Activated CD8-positive, alpha-beta memory T cell treated with anti-CD3 and anti-CD28 coated beads, Interleukin-2, amount 10 ng/mL, durations not matched to agents 7 days and 5 days (primary cell): ENCODE measurements at regions of chr1 and their contacts with region 1.

Region 1: GRCh38 chr1:110053557-110054428 is 16.7 kb downstream of the ALX3 start:
- DNase-seq: peak; percentile 74
- ATAC-seq: peak; percentile 81
- H3K4me3 Mint-ChIP-seq: no peak overlapping the region
- H3K27ac Mint-ChIP-seq: no peak overlapping the region
- H3K4me1 Mint-ChIP-seq: no peaks in the 10 kb centered on the region
- H3K27me3 Mint-ChIP-seq: no peaks in the 10 kb centered on the region

Region 2: GRCh38 chr1:110068646-110069403 is 15.0 kb after region 1 on chr1:
- CTCF ChIA-PET with region 1: interaction called, 16 read pairs
- DNase-seq: no peak
- ATAC-seq: peak; percentile 34
- H3K4me3 Mint-ChIP-seq: peak overlapping the region; percentile 2
- H3K27ac Mint-ChIP-seq: peak overlapping the region; percentile 41
- H3K4me1 Mint-ChIP-seq: peaks cover 9% of the 10 kb centered on the region
- H3K27me3 Mint-ChIP-seq: peaks cover 76% of the 10 kb centered on the region

Region 3: DNA sequence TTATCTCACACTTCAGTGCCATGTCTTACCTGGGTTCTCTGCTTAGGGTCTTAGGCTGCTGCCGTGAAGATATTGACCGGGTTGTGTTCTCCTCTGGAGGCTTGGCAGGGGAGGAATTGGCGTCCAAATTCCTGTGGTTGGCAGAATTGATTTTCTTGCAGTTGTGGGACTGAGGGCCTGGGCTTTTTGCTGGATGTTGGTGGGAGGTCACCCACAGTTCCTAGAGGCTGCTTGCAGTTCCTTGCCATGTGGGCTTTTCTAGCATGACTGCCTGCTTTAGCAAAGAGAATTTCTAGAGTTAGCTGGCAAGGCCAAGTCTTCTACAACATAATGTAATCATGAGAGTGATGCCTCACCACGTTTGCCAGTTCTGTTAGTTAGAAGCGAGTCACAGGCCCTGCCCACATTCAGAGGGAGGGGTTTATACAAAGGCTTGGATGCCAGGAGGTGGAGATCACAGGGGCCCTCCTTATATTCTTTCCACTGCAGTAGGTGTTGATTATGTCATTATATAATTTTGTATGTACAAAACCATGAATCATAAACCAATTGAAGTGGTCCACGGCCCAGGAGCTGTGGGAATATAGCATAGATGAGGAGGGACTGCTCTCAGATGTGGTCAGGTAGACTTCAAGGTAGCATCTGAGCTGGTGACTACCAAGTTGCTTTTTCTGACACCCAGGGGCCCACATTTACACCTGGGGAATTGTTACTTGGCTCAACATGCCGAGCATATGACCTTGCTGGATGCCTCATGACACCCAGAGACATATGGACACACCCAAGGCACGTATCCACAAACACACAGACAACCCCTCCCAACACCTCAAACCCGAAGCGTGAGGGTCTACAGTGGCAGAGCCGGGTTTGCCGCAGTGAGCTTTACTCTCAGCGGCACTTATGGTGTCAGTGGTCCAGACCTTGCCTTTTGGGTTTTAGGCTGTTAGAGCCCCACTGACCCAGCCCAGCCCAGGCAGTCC is 65.1 kb after region 1 on chr1:
- CTCF ChIA-PET with region 1: interaction called, 11 read pairs
- DNase-seq: no peak
- ATAC-seq: no peak
- H3K4me3 Mint-ChIP-seq: no peak overlapping the region
- H3K27ac Mint-ChIP-seq: no peak overlapping the region
- H3K4me1 Mint-ChIP-seq: no peaks in the 10 kb centered on the region
- H3K27me3 Mint-ChIP-seq: peaks cover 35% of the 10 kb centered on the region